GM13976 (cell line): ENCODE measurements at regions of chr10 and their contacts with region 1.

Region 1: GRCh38 chr10:67849331-67850011 is 11.5 kb upstream of the DNAJC12 start:
- DNase-seq: peak; percentile 93
- CTCF ChIP-seq: no peak

Region 2: GRCh38 chr10:68163735-68164134 is 314.3 kb after region 1 on chr10:
- in situ Hi-C with region 1: loop called (anchors 5 kb)
- DNase-seq: no peak
- CTCF ChIP-seq: no peak

Region 3: DNA sequence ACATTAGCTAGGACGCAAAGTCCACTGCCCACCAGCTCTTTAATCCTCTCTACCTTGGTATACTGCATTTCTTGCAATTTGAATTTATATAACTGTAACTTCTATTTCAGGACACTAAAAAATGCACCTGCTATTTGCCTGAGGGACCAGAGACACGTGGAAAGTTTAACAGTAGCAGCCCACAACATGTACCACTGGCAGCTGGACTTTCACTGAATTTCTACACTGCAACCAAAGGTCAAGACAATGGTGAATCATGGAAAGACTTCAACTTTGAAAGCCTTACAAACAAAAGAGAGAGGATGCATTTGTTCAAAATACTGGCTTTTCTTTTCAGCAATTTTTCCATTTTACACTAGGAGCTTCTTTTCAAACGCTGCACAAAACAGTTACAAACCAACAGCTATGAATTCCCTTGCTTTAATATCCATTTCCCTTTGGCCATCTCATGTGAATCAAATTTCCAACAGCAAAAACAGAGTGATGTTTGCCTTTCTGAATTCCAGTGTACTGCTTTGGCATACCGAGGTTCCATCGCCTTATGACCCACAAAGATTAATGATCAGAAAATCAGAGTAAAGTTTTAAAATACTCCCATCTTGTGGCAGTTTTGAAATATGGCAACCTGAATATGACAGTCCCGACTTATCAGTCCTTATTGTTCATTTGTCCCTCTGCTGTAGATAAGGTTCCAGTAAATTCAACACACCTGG is 452.5 kb after region 1 on chr10:
- in situ Hi-C with region 1: loop called (anchors 25 kb)
- DNase-seq: peak; percentile 55
- CTCF ChIP-seq: peak; percentile 34